ENCODE measurements at regions of chr2 and their contacts with region 1.

Region 1: DNA sequence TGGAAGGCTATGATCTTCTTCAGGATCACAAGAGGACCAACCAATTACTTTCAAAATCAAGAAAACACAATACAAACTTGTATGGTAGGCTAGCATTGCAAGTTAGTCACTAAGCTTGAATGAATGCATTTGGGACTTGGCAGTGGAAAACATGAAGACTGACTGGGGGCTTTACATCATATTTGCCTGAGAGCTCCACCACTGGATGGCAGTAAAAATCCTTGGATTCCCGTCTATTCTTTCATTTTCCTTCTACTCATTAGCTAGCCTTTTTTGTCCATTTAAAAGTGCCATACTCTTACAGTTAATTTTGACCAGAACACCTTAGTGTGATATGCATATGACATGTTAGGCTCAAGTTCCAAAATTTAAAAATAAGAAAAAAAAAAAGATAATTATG is 63.5 kb upstream of the RASGRP3 start:
- DNase-seq: peak in 3 of 4 experiments; percentile 27 to 56 (median 45)
- ATAC-seq: peak; percentile 83
- H3K4me3 ChIP-seq: no peak overlapping the region
- H3K27ac ChIP-seq: no peak overlapping the region
- H3K4me1 ChIP-seq: no peaks in the 10 kb centered on the region
- H3K27me3 ChIP-seq: peaks cover 4 to 10% of the 10 kb centered on the region in 2 experiments; a peak in 3 of 5 replicates
- CTCF ChIP-seq: peak in 2 of 3 experiments; percentile 57 to 65; a peak in 5 of 6 replicates
- EP300 ChIP-seq: no peak
- POLR2A ChIP-seq: no peak
- RAD21 ChIP-seq: peak; percentile 69 to 91

Region 2: DNA sequence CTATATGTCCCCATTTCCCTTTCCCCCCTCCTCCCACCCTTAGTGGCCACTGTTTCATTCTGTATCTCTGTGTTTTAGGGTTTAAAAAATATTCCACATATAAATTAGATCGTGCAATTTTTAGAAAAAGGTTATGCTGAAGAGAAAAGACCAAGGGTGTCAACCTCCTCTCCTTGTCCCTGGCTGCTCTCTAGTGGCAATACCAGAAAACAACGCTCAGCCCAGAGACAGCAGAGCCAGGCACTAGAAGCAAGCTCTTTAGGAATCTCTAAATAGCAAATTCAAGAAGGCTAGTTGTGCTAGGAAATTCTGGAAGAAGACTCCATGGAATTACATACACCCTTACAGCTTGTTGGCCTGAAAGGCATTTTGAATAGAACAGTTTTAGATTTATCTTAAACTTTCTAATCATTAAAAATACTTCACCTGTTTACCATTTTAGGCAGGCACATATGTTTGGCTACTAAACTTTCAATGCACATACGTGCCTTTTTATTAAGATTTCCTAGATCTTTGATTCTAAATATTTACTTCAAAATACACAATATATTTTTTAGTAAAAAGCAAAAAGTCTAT is 28.4 kb after region 1 on chr2:
- CTCF ChIA-PET with region 1: interaction called, 3 read pairs
- POLR2A ChIA-PET with region 1: interaction called, 3 read pairs
- in situ Hi-C with region 1: no loop called
- intact Hi-C with region 1: loop called (anchors 1 kb)
- DNase-seq: peak; percentile 23 to 64 (median 42)
- ATAC-seq: peak; percentile 92
- H3K4me3 ChIP-seq: no peak overlapping the region
- H3K27ac ChIP-seq: no peak overlapping the region
- H3K4me1 ChIP-seq: peaks cover 0 to 5% of the 10 kb centered on the region in 2 experiments; a peak in 2 of 5 replicates
- H3K27me3 ChIP-seq: no peaks in the 10 kb centered on the region
- CTCF ChIP-seq: peak; percentile 69 to 71 (median 71)
- EP300 ChIP-seq: no peak
- POLR2A ChIP-seq: no peak
- RAD21 ChIP-seq: peak; percentile 68 to 89

Region 3: DNA sequence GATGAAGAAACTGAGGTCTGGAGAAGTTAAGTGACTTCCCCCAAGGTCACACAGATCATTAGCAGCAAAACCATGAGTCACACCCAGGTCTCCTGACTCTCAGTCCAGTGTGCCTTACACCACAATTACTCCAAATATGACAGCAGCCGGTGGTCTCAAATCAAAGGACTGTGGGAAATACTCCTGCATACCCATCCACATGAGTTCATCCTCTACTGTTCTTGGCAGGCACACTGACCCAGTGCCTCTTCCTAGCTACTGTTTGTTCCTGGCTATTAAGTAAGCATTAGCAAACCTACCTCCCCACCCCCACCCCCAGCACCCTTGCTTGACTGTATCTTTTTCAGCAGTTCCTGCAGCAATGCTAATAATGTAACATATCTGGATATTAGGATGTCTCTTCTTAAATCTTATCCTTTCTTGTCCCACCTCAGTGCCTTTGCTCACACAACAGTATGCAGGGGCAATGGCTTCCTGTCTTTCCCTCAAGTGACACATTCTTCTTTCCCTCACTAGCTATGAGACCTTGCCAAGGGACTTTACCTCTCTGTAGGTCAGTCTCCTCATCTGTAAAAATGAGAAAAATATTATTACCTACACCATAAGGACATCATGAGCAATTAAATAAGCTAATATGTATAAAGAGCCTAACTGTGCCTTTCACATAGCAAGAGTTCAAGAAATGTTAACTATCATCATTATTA is 140.0 kb after region 1 on chr2:
- CTCF ChIA-PET with region 1: no interaction called
- POLR2A ChIA-PET with region 1: no interaction called
- in situ Hi-C with region 1: no loop called
- intact Hi-C with region 1: no loop called
- DNase-seq: no peak
- ATAC-seq: no peak
- H3K4me3 ChIP-seq: no peak overlapping the region
- H3K27ac ChIP-seq: no peak overlapping the region
- H3K4me1 ChIP-seq: no peaks in the 10 kb centered on the region
- H3K27me3 ChIP-seq: peaks cover 5 to 9% of the 10 kb centered on the region in 2 experiments; a peak in 3 of 5 replicates
- CTCF ChIP-seq: no peak
- EP300 ChIP-seq: no peak
- POLR2A ChIP-seq: no peak
- RAD21 ChIP-seq: no peak

Region 4: DNA sequence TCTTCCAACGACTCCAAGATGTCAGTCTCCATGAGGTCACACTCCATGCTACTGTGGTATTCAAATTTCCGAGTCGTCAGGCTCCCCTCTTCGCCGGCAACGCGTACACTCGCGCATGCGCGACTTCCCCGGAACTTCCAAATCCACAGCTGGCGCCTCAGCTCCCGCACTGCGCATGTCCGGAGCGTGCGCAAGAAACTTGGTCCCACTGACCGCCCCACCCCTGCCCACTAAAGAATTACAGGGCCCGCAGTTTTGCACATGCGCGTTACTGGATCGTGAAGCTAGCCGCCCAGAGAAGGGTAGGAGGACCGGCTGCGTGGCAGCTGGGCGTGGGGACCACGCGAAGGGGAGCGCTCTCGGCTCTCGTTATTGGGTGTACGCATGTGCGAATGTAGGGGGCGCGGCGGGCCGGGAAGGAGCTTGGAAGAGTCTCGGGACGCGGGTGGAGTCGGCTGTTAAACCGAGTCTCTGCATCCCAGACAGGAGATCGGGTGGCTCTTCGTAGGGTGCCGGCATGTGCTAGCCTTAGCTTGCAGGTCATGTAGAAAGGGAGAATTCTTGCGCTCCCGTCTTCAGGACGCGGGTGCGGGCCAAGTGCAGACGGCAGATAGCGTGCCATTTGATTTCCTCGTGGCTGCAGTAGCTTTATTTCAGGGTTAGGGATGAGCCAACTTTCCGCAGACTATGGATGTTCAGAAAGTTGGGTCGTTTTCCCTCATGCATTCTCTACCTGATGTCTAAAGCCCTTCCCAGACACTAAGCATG is 186.4 kb after region 1 on chr2 and contains the start of gene FAM98A:
- CTCF ChIA-PET with region 1: no interaction called
- POLR2A ChIA-PET with region 1: no interaction called
- in situ Hi-C with region 1: loop called (anchors 25 kb)
- intact Hi-C with region 1: no loop called
- DNase-seq: peak; percentile 95 to 99 (median 97)
- ATAC-seq: peak; percentile 94
- H3K4me3 ChIP-seq: peak within 1 kb of the TSS; percentile 96
- H3K27ac ChIP-seq: peak within 1 kb of the TSS; percentile 84
- H3K4me1 ChIP-seq: peaks cover 0 to 11% of the 10 kb centered on the region in 2 experiments; a peak in 2 of 5 replicates
- H3K27me3 ChIP-seq: no peaks in the 10 kb centered on the region
- CTCF ChIP-seq: 0 out of 6 replicates have a peak, but pooled peaks of 1 of the 3 experiments have one; percentile 24
- EP300 ChIP-seq: no peak
- POLR2A ChIP-seq: peak; percentile 75
- RAD21 ChIP-seq: no peak
- polyA plus RNA-seq, gene FAM98A: 16.5 to 23.4 TPM

Region 5: DNA sequence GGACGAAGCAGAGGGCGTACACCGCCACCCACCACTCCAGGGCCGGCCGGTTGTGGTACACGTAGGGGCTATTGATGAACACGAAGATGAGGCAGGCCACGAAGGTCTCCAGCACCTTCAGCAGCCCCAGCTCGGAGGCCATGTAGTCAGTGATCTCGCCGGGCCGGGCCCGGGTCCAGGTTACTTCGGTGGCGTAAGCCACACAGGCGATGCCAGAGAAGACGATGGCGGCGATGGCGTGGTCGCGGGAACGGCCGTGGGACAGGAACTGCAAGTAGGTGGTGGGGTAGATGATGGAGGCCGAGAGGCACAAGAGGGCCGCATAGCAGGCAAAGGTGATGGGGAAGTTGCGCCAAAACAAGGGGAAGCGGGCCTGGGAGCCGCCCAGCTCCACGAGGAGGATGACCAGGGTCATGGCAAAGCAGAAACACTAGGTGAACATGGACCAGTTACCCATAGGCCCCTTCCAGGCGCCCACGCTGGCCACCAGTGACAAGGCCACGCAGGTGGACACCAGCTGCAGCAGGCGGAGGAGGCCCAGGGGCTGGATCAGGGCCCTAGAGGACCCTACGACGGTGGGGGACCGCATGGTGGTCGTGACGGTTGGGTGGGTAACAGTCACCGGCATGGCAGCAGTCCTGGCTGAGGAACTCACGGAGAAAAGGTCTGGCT is 314.6 kb after region 1 on chr2:
- CTCF ChIA-PET with region 1: no interaction called
- POLR2A ChIA-PET with region 1: no interaction called
- in situ Hi-C with region 1: no loop called
- intact Hi-C with region 1: no loop called
- DNase-seq: no peak
- ATAC-seq: peak; percentile 40; the same call in 2 of the 3 replicates
- H3K4me3 ChIP-seq: no peak overlapping the region
- H3K27ac ChIP-seq: no peak overlapping the region
- H3K4me1 ChIP-seq: peaks cover 0 to 13% of the 10 kb centered on the region in 2 experiments; a peak in 3 of 5 replicates
- H3K27me3 ChIP-seq: peaks cover 0 to 7% of the 10 kb centered on the region in 2 experiments; a peak in 2 of 5 replicates
- CTCF ChIP-seq: no peak
- EP300 ChIP-seq: no peak
- POLR2A ChIP-seq: no peak
- RAD21 ChIP-seq: no peak

Measured in K562 (cell line).